Transverse colon (tissue), 4 donors: ENCODE measurements at regions of chr1 and their contacts with region 1.

Region 1: GRCh38 chr1:118151312-118151937 is 33.6 kb downstream of the SPAG17 start:
- DNase-seq: peak; percentile 28
- H3K4me3 ChIP-seq: no peak overlapping the region
- H3K27ac ChIP-seq: no peak overlapping the region
- H3K4me1 ChIP-seq: no peaks in the 10 kb centered on the region
- H3K27me3 ChIP-seq: no peaks in the 10 kb centered on the region
- CTCF ChIP-seq: peak; percentile 52 to 67 (median 60)
- EP300 ChIP-seq: no peak
- POLR2A ChIP-seq: no peak

Region 2: DNA sequence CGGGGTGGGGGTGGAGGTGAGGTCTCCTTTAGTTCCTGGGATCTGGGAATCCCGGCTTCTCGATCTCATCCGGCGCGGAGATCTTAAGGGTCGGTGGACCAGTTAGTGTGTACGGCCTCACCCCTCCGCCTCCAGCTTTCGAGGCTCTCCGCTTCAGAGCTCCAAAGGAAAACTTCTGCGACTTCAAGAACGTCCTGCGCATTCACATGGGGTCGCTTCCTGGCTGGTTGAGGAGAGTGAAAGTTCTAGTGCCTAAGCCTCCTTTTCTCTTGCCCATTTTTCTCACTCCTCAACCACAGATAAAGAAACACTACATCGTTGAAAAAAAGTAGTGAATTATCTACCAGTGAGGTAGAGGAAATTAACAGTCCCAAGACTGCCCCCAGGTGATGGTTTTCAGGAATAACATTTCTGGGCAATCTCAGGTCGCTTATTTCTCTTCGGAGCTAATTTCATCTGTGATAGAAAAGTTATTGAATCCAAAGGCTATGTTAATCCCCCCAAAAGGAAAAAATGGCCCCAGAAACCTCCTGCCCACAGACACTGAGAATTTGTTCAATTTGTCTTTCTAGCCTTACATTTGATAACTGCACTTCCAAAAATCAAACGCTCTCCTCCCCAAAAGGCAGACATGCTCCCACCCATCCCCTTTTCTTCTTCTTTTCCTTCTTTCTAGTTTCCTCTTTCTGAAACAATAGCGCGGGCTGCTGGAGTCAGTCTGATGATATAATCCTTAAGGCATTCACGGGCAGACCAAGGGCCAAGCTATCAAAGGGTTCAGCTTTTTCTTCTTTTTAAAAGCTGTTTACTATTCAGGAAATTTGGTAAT is 857.3 kb after region 1 on chr1:
- in situ Hi-C with region 1: loop called in 2 of 4 experiments (anchors 25 kb)
- intact Hi-C with region 1: loop called (anchors 10 kb)
- DNase-seq: no peak
- H3K4me3 ChIP-seq: peak overlapping the region in 3 of 4 donors; percentile 6 to 41 (median 10)
- H3K27ac ChIP-seq: no peak overlapping the region
- H3K4me1 ChIP-seq: peaks cover 9 to 29% (median 21%) of the 10 kb centered on the region in 4 donors
- H3K27me3 ChIP-seq: peaks cover 70% of the 10 kb centered on the region
- CTCF ChIP-seq: peak; percentile 51 to 71 (median 62)
- EP300 ChIP-seq: no peak
- POLR2A ChIP-seq: no peak